ENCODE measurements at regions of chr4 and their contacts with region 1.

Region 1: GRCh38 chr4:111905511-111905910 is 239.7 kb upstream of the FAM241A start:
- DNase-seq: no peak
- H3K4me3 ChIP-seq: no peak overlapping the region
- H3K27ac ChIP-seq: no peak overlapping the region
- H3K27me3 ChIP-seq: no peaks in the 10 kb centered on the region
- CTCF ChIP-seq: no peak

Region 2: GRCh38 chr4:110245577-110245976 is 1659.9 kb before region 1 on chr4:
- CTCF ChIA-PET with region 1: interaction called, 10 read pairs
- POLR2A ChIA-PET with region 1: no interaction called
- DNase-seq: no peak
- H3K4me3 ChIP-seq: no peak overlapping the region
- H3K27ac ChIP-seq: no peak overlapping the region
- H3K27me3 ChIP-seq: no peaks in the 10 kb centered on the region
- CTCF ChIP-seq: no peak

Measured in AG04450 (cell line).